ENCODE measurements at regions of chr7 and their contacts with region 1.

Region 1: GRCh38 chr7:80095545-80095944 is 39.1 kb upstream of the GNAI1 start:
- DNase-seq: no peak
- ATAC-seq: no peak
- H3K4me3 ChIP-seq: no peak overlapping the region
- H3K27ac ChIP-seq: no peak overlapping the region
- H3K4me1 ChIP-seq: no peaks in the 10 kb centered on the region
- H3K27me3 ChIP-seq: no peaks in the 10 kb centered on the region

Region 2: GRCh38 chr7:79789584-79790345 is 305.8 kb before region 1 on chr7:
- intact Hi-C with region 1: no loop called
- DNase-seq: no peak
- ATAC-seq: no peak
- H3K4me3 ChIP-seq: no peak overlapping the region
- H3K27ac ChIP-seq: no peak overlapping the region
- H3K4me1 ChIP-seq: no peaks in the 10 kb centered on the region
- H3K27me3 ChIP-seq: no peaks in the 10 kb centered on the region

Region 3: DNA sequence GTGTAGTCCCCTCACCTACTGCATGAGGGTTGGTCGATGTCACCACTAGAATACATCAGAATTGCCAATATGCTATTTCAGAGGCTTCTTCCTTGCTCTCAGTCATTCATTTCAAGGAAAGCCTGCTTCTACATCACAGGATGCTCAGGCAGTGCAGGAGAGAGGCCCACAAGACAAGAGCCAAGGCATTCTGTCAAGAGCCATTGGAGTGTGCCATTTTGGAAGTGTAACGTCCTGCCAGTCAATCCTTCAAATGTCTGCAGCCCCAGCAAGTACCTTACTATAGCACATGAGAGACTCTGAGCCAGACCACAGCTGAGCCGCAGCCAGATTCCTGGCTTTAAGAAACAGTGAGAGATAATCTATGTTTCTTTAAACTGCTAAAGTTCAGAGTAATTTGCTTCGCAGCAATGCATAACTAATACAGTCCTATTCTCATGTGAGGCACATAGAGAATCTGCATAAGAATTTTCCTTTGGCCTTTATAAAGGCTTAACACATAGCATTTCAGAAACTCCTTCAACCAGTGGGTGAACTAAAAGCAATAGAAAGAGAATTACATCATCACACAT is 127.4 kb before region 1 on chr7:
- intact Hi-C with region 1: no loop called
- DNase-seq: no peak
- ATAC-seq: no peak
- H3K4me3 ChIP-seq: no peak overlapping the region
- H3K27ac ChIP-seq: no peak overlapping the region
- H3K4me1 ChIP-seq: no peaks in the 10 kb centered on the region
- H3K27me3 ChIP-seq: no peaks in the 10 kb centered on the region

Region 4: GRCh38 chr7:80453699-80454340 is 358.3 kb after region 1 on chr7:
- intact Hi-C with region 1: loop called in 1 of 2 experiments (anchors 2 kb)
- DNase-seq: no peak
- ATAC-seq: no peak
- H3K4me3 ChIP-seq: no peak overlapping the region
- H3K27ac ChIP-seq: no peak overlapping the region
- H3K4me1 ChIP-seq: peaks cover 0 to 1% of the 10 kb centered on the region in 2 donors
- H3K27me3 ChIP-seq: no peaks in the 10 kb centered on the region

Measured in aorta (tissue), 5 donors.